ENCODE measurements at regions of chr18 and their contacts with region 1.

Region 1: GRCh38 chr18:45951016-45951714 is 16.0 kb downstream of the EPG5 start:
- DNase-seq: no peak
- ATAC-seq: no peak
- H3K4me3 Mint-ChIP-seq: no peak overlapping the region
- H3K27ac Mint-ChIP-seq: no peak overlapping the region
- H3K4me1 Mint-ChIP-seq: peaks cover 11% of the 10 kb centered on the region
- H3K27me3 Mint-ChIP-seq: no peaks in the 10 kb centered on the region

Region 2: GRCh38 chr18:45596036-45596435 is 355.1 kb before region 1 on chr18:
- CTCF ChIA-PET with region 1: no interaction called
- POLR2A ChIA-PET with region 1: no interaction called
- intact Hi-C with region 1: no loop called
- DNase-seq: no peak
- ATAC-seq: no peak
- H3K4me3 Mint-ChIP-seq: no peak overlapping the region
- H3K27ac Mint-ChIP-seq: no peak overlapping the region
- H3K4me1 Mint-ChIP-seq: no peaks in the 10 kb centered on the region
- H3K27me3 Mint-ChIP-seq: peaks cover 4% of the 10 kb centered on the region

Region 3: DNA sequence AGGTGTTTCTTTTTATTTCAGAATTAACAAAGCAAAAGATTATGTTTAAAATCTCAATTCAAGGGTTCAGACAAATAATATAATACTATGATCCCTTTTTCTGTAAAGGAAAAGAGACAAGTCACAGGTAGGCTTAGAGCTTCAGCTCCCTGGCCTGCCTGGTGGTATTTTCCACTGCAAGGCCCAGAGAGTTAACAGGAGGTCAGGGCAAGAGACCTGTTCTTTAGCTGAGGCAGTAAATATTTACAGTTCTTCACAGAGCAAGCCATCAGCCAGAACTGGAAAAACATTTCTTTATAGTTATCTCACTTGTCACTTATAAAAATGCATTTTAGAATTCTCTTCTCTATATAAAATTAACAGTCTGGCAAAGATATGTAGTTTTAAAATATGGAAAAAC is 54.2 kb before region 1 on chr18:
- CTCF ChIA-PET with region 1: no interaction called
- POLR2A ChIA-PET with region 1: interaction called, 11 read pairs
- intact Hi-C with region 1: no loop called
- DNase-seq: no peak
- ATAC-seq: no peak
- H3K4me3 Mint-ChIP-seq: no peak overlapping the region
- H3K27ac Mint-ChIP-seq: no peak overlapping the region
- H3K4me1 Mint-ChIP-seq: peaks cover 2% of the 10 kb centered on the region
- H3K27me3 Mint-ChIP-seq: no peaks in the 10 kb centered on the region

Measured in activated CD4-positive, alpha-beta T cell treated with anti-CD3 and anti-CD28 coated beads for 36 hours (primary cell).